PC-3 (cell line): ENCODE measurements at regions of chr11 and their contacts with region 1.

Region 1: DNA sequence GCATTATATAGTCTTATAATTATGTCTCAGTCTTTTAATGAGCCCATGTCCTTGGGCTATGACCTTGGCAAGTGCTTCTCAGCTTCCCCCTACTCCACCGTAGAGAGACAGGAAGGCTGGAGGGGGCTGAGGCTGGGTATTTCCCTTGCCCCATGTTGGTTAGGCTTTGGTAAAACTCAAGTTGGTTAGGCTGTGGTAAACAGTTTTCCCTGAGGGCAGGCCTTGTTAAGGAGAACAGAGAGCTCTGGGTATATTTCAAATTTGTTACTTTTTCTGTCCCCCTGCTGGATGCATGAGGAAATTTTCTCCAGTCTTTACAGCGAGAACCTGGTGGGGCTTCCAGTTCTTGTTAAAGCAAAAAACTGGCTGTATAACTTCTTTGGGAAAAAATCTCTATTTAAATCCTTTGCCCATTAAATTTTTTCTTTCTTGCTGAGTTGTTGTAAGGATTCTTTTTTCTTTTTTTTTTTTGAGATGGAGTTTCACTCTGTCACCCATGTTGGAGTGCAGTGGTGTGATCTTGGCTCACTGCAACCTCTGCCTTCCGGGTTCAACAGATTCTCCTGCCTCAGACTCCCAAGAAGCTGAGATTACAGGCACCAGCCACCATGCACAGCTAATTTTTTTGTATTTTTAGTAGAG is 12.2 kb upstream of the DCHS1 start:
- DNase-seq: peak; percentile 52
- ATAC-seq: peak; percentile 56
- H3K4me3 ChIP-seq: no peak overlapping the region
- H3K27ac ChIP-seq: no peak overlapping the region
- H3K4me1 ChIP-seq: no peaks in the 10 kb centered on the region
- H3K27me3 ChIP-seq: no peaks in the 10 kb centered on the region
- CTCF ChIP-seq: peak; percentile 61

Region 2: DNA sequence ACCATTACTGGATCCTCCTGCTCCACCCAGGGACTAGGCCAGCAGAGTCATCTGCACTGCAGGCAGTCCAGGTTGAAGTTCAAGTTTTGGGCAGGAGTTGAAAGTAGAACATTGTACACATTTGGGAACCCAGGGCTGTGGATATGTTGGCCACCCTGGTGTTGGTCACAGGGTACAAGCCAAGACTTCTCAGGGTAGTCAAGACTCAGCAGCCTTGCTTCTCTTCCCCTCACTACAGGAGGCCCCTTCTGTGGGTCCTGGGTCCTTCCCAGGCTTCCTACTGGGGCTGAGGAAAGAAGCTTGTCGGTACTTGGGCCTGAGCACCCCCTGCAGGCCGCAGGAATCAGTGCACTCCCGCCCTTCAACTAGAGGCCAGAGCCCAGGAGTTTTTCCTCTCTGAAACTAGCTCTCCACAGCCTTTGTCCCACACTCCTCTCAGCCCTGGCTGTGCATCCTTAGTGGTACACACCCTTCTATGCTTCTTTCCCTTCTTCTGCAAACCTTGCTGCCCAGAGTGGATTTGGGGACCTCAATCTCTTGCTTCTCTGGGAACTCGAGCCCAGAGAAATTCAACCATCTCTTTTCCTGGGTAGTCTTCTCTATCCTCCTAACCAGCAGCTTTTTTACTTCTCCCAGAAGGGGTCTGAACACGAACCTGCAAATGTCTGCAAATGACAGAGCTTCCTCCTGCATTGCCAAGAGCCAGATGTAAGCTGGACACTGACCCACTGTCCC is 224.4 kb before region 1 on chr11:
- CTCF ChIA-PET with region 1: no interaction called
- POLR2A ChIA-PET with region 1: no interaction called
- intact Hi-C with region 1: loop called (anchors 5 kb)
- DNase-seq: peak; percentile 58
- ATAC-seq: peak; percentile 80
- H3K4me3 ChIP-seq: no peak overlapping the region
- H3K27ac ChIP-seq: no peak overlapping the region
- H3K4me1 ChIP-seq: no peaks in the 10 kb centered on the region
- H3K27me3 ChIP-seq: no peaks in the 10 kb centered on the region
- CTCF ChIP-seq: peak; percentile 84

Region 3: GRCh38 chr11:6531267-6531752 is 136.5 kb before region 1 on chr11:
- CTCF ChIA-PET with region 1: interaction called, 4 read pairs
- POLR2A ChIA-PET with region 1: no interaction called
- intact Hi-C with region 1: loop called (anchors 5 kb)
- DNase-seq: peak; percentile 60
- ATAC-seq: peak; percentile 71
- H3K4me3 ChIP-seq: no peak overlapping the region
- H3K27ac ChIP-seq: no peak overlapping the region
- H3K4me1 ChIP-seq: no peaks in the 10 kb centered on the region
- H3K27me3 ChIP-seq: no peaks in the 10 kb centered on the region
- CTCF ChIP-seq: peak; percentile 82

Region 4: GRCh38 chr11:6612213-6613041 is 55.4 kb before region 1 on chr11 and contains the start of gene TAF10:
- CTCF ChIA-PET with region 1: no interaction called
- POLR2A ChIA-PET with region 1: no interaction called
- intact Hi-C with region 1: loop called (anchors 5 kb)
- DNase-seq: peak; percentile 92
- ATAC-seq: peak; percentile 95
- H3K4me3 ChIP-seq: peak within 1 kb of the TSS; percentile 85
- H3K27ac ChIP-seq: peak within 1 kb of the TSS; percentile 83
- H3K4me1 ChIP-seq: peaks cover 17% of the 10 kb centered on the region
- H3K27me3 ChIP-seq: no peaks in the 10 kb centered on the region
- CTCF ChIP-seq: peak; percentile 48
- total RNA-seq, gene TAF10: 102 and 128 TPM in 2 replicates